CD4-positive, alpha-beta memory T cell (primary cell): ENCODE measurements at regions of chr4 and their contacts with region 1.

Region 1: DNA sequence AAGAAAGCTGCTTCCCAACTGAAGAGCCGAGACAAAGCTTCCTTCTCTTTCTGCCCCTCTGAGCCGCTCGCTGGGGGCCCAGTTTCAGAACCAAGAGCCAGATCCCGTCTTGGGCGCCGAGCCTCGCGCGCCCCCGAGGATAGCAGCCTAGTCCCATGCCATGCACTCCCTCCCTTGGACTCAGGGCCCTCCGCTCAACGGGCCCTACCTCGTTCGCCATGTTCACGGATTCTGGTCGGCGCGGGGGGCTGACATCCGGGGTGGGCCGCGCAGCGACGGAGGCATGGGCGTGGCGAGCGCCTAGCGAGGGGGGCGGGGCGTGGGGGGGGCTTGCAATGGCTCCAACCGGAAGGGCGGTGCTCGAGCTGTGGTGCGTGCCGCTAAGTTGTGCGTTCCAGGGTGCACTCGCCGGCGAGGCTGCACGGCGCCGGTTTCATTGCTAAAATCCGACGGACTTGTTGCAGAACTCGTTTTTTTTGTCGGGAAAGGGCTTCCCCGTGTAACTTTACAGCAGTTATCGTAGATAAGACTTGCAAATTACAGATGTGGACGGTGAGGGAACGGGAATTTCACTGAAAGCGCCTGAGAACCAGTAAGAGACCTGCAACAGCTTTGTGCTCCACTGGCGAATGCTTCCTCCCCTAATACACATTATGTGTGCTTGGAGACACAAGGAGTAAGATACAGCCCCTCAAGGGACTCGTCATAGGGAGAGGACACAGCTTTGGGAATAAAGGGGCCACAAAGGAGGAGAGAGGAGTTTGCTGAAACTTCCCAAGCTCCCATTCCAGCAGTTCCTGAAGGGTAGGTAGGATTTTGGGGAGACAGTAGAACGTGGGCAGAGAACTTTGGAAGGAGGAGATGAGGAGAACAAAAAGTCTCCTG is at the start of gene ADH5:
- DNase-seq: peak; percentile 83 to 90 (median 86)
- H3K4me3 ChIP-seq: peak within 1 kb of the TSS; percentile 73 to 99
- H3K4me3 Mint-ChIP-seq: peak within 1 kb of the TSS; percentile 92 to 99 (median 98)
- H3K27ac ChIP-seq: peak within 1 kb of the TSS; percentile 77
- H3K27ac Mint-ChIP-seq: peak within 1 kb of the TSS; percentile 89 to 99 (median 98)
- H3K4me1 ChIP-seq: peaks cover 39% of the 10 kb centered on the region
- H3K4me1 Mint-ChIP-seq: peaks cover 35 to 71% (median 54%) of the 10 kb centered on the region in 4 donors
- H3K27me3 ChIP-seq: no peaks in the 10 kb centered on the region
- H3K27me3 Mint-ChIP-seq: no peaks in the 10 kb centered on the region
- total RNA-seq, gene ADH5: 75.6 to 80.5 TPM

Region 2: GRCh38 chr4:98909646-98910401 is 178.9 kb before region 1 on chr4:
- CTCF ChIA-PET with region 1: no interaction called
- POLR2A ChIA-PET with region 1: no interaction called
- intact Hi-C with region 1: no loop called
- DNase-seq: no peak
- H3K4me3 ChIP-seq: no peak overlapping the region
- H3K4me3 Mint-ChIP-seq: peak overlapping the region in 5 of 8 donors; percentile 1 to 63 (median 35)
- H3K27ac ChIP-seq: no peak overlapping the region
- H3K27ac Mint-ChIP-seq: peak overlapping the region in 3 of 7 donors; percentile 22 to 74 (median 48)
- H3K4me1 ChIP-seq: peaks cover 59% of the 10 kb centered on the region
- H3K4me1 Mint-ChIP-seq: peaks cover 43 to 70% (median 54%) of the 10 kb centered on the region in 4 donors
- H3K27me3 ChIP-seq: no peaks in the 10 kb centered on the region
- H3K27me3 Mint-ChIP-seq: no peaks in the 10 kb centered on the region

Region 3: DNA sequence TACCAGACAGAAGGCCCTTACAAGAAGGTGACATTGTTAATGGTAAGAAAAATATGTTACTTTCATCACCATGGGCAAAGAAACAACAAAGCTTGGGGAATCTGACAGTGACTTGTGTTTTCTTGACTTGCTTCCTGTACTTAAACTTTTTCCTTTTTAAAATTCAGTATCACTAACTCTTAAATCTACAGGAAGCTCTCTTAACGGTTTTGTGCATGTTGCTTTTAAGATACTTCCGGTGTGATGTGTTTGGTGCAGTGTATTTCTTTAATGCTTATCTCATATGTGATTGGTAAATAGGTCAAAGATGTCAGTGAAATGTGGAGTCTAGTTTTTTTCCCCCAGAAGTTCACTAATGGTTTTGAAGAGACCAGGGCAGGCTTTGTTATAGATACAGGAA is 45.4 kb before region 1 on chr4:
- CTCF ChIA-PET with region 1: no interaction called
- POLR2A ChIA-PET with region 1: interaction called, 10 read pairs
- intact Hi-C with region 1: no loop called
- DNase-seq: peak in 4 of 5 donors; percentile 51 to 70 (median 62)
- H3K4me3 ChIP-seq: no peak overlapping the region
- H3K4me3 Mint-ChIP-seq: peak overlapping the region; percentile 7 to 73 (median 70)
- H3K27ac ChIP-seq: peak overlapping the region; percentile 42
- H3K27ac Mint-ChIP-seq: peak overlapping the region; percentile 69 to 94 (median 89)
- H3K4me1 ChIP-seq: peaks cover 21% of the 10 kb centered on the region
- H3K4me1 Mint-ChIP-seq: peaks cover 10 to 22% (median 18%) of the 10 kb centered on the region in 4 donors
- H3K27me3 ChIP-seq: no peaks in the 10 kb centered on the region
- H3K27me3 Mint-ChIP-seq: no peaks in the 10 kb centered on the region